GM12878 (cell line): ENCODE measurements at regions of chr11 and their contacts with region 1.

Region 1: GRCh38 chr11:131579932-131580387 is 209.5 kb downstream of the NTM start:
- DNase-seq: no peak
- ATAC-seq: peak; percentile 93
- H3K4me3 ChIP-seq: no peak overlapping the region
- H3K27ac ChIP-seq: no peak overlapping the region
- H3K4me1 ChIP-seq: no peaks in the 10 kb centered on the region
- H3K27me3 ChIP-seq: peaks cover 4 to 13% of the 10 kb centered on the region in 2 experiments; a peak in 3 of 4 replicates
- CTCF ChIP-seq: peak; percentile 53 to 62 (median 56)
- EP300 ChIP-seq: no peak
- POLR2A ChIP-seq: no peak
- RAD21 ChIP-seq: peak; percentile 56

Region 2: GRCh38 chr11:131633921-131634715 is 54.2 kb after region 1 on chr11:
- CTCF ChIA-PET with region 1: no interaction called
- POLR2A ChIA-PET with region 1: no interaction called
- RAD21 ChIA-PET with region 1: no interaction called
- SMC1A ChIA-PET with region 1: no interaction called
- in situ Hi-C with region 1: no loop called
- intact Hi-C with region 1: no loop called
- DNase-seq: no peak
- ATAC-seq: no peak
- H3K4me3 ChIP-seq: no peak overlapping the region
- H3K27ac ChIP-seq: no peak overlapping the region
- H3K4me1 ChIP-seq: no peaks in the 10 kb centered on the region
- H3K27me3 ChIP-seq: peaks cover 1 to 3% of the 10 kb centered on the region in 2 experiments; a peak in 2 of 4 replicates
- CTCF ChIP-seq: no peak
- EP300 ChIP-seq: no peak
- POLR2A ChIP-seq: no peak
- RAD21 ChIP-seq: no peak

Region 3: DNA sequence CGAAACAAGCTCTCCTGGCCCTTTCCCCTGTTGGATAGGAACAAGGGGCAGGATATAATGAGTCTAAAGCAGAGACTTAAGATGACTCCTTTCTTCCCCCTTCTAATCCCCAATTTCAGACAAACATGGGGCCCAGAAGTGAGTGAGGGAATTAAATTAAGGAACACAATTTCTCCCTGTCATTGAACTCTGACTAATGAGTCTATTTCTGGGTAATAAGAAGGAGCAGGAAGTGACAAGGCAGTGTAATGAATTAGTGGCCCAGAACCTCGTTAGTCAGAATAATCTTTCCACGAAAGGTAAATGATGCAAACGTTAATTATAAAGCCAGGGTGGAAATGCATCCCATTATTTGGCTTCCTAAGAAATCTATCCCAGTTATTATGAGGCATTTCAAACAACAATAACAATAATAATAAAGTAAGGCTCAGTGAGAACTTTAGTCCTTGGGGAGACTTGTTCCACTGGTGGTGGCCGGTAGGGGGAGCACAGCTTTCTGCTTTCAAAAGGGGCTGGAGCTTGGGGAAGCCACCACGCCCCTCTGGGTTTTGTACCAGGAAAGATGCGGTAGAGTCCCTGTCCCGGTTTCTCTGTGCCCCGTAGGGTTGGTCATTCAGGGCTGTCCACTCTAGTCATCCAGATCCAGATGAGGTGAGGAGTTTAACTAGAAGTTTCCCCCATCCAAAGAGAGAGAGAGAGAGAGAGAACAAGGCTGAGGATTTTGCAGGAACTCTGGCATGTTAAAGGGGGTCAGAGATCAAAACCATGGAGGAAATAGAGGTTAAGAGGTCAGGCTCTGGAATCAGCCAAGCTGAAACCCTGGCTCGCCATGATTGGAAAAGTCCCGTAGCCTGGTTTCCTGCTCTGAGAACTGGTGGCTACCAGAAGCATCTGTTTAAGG is 88.8 kb after region 1 on chr11:
- CTCF ChIA-PET with region 1: interaction called, 46 read pairs
- POLR2A ChIA-PET with region 1: no interaction called
- RAD21 ChIA-PET with region 1: interaction called, 12 read pairs
- SMC1A ChIA-PET with region 1: interaction called, 8 read pairs
- in situ Hi-C with region 1: loop called (anchors 5 kb)
- intact Hi-C with region 1: no loop called
- DNase-seq: no peak
- ATAC-seq: peak; percentile 91
- H3K4me3 ChIP-seq: no peak overlapping the region
- H3K27ac ChIP-seq: no peak overlapping the region
- H3K4me1 ChIP-seq: no peaks in the 10 kb centered on the region
- H3K27me3 ChIP-seq: 0 out of 4 replicates have a peak, but pooled peaks cover 0 to 3% of the 10 kb centered on the region in 2 experiments
- CTCF ChIP-seq: peak; percentile 55 to 86 (median 79)
- EP300 ChIP-seq: no peak
- POLR2A ChIP-seq: no peak
- RAD21 ChIP-seq: no peak